Naive thymus-derived CD4-positive, alpha-beta T cell (primary cell): ENCODE measurements at regions of chr12 and their contacts with region 1.

Region 1: DNA sequence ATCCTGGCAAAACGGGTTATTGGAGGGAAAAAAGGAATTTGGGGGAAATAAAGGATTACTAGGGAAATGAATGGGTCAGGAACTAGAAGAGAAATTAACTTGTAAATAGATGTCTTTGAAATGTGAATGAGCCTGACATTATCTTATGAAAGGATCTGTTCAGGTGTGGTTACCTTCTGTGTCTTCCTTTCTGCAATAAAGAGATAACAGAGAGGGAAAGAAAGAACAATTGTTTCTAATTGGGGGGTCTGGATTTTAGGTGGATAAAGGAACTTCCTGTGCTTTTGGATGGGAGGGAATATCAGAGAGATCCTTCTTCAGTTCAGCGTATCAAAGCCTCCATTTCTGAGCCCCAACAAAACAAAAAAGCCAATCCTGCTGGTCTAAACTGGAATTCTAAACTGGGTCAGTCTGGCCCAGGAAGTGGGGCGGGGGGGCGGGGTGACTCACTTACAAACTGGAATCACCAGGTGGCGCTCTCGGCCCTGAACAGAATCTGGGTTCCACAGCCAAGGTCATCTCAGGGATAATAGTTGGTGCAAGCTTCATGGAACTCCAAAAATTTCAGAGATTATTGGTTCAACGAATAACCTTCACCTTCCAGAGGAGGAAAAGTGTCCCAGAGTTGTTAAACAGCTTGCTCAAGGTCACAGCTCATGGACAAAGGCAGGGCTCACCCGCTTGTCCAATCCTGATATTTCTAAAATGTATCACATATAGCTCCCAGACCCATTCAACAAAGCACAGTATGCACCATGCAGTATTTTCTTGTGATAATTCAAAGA is 15.2 kb upstream of the PEBP1 start:
- DNase-seq: peak in 8 of 9 donors; percentile 12 to 50 (median 34)
- ATAC-seq: peak; percentile 76
- H3K4me3 ChIP-seq: no peak overlapping the region
- H3K4me3 Mint-ChIP-seq: no peak overlapping the region
- H3K27ac ChIP-seq: no peak overlapping the region
- H3K27ac Mint-ChIP-seq: peak overlapping the region in 7 of 9 donors; percentile 51 to 71 (median 62)
- H3K4me1 ChIP-seq: peaks cover 0 to 3% of the 10 kb centered on the region in 2 donors
- H3K4me1 Mint-ChIP-seq: peaks cover 4 to 12% (median 8%) of the 10 kb centered on the region in 7 donors
- H3K27me3 ChIP-seq: no peaks in the 10 kb centered on the region
- H3K27me3 Mint-ChIP-seq: no peaks in the 10 kb centered on the region

Region 2: GRCh38 chr12:118082161-118082560 is 38.6 kb before region 1 on chr12:
- CTCF ChIA-PET with region 1: no interaction called
- POLR2A ChIA-PET with region 1: no interaction called
- intact Hi-C with region 1: no loop called
- DNase-seq: no peak
- ATAC-seq: no peak
- H3K4me3 ChIP-seq: no peak overlapping the region
- H3K4me3 Mint-ChIP-seq: no peak overlapping the region
- H3K27ac ChIP-seq: no peak overlapping the region
- H3K27ac Mint-ChIP-seq: no peak overlapping the region
- H3K4me1 ChIP-seq: no peaks in the 10 kb centered on the region
- H3K4me1 Mint-ChIP-seq: peaks cover 0 to 1% (median 0%) of the 10 kb centered on the region in 7 donors
- H3K27me3 ChIP-seq: no peaks in the 10 kb centered on the region
- H3K27me3 Mint-ChIP-seq: no peaks in the 10 kb centered on the region

Region 3: GRCh38 chr12:118183705-118184104 is 62.9 kb after region 1 on chr12:
- CTCF ChIA-PET with region 1: no interaction called
- POLR2A ChIA-PET with region 1: interaction called, 4 read pairs
- intact Hi-C with region 1: loop called in 1 of 2 experiments (anchors 2 kb)
- DNase-seq: no peak
- ATAC-seq: no peak
- H3K4me3 ChIP-seq: no peak overlapping the region
- H3K4me3 Mint-ChIP-seq: no peak overlapping the region
- H3K27ac ChIP-seq: no peak overlapping the region
- H3K27ac Mint-ChIP-seq: peak overlapping the region in 1 of 9 donors; percentile 58
- H3K4me1 ChIP-seq: no peaks in the 10 kb centered on the region
- H3K4me1 Mint-ChIP-seq: peaks cover 7 to 33% (median 16%) of the 10 kb centered on the region in 7 donors
- H3K27me3 ChIP-seq: no peaks in the 10 kb centered on the region
- H3K27me3 Mint-ChIP-seq: no peaks in the 10 kb centered on the region

Region 4: DNA sequence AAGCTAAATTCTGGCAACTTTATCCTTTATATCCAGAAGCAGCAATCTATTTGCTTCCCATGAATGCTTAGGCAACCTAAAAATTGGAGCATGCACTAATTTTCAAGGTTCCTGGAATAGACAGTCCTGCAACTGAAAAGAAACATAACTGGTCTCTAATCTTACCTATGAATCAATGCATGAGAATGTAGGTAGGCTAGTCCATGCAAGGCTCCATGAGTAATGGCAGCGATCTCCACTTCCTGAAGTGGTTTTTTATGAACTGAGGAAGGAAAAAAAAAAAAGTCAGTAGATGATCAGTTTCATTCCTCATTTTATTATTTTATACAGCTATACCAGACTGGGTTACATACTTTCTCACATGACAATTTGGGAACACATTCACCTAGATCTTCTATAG is 117.1 kb after region 1 on chr12:
- CTCF ChIA-PET with region 1: interaction called, 12 read pairs
- POLR2A ChIA-PET with region 1: no interaction called
- intact Hi-C with region 1: no loop called
- DNase-seq: no peak
- ATAC-seq: no peak
- H3K4me3 ChIP-seq: no peak overlapping the region
- H3K4me3 Mint-ChIP-seq: no peak overlapping the region
- H3K27ac ChIP-seq: no peak overlapping the region
- H3K27ac Mint-ChIP-seq: peak overlapping the region in 6 of 9 donors; percentile 8 to 83 (median 38)
- H3K4me1 ChIP-seq: no peaks in the 10 kb centered on the region
- H3K4me1 Mint-ChIP-seq: peaks cover 0 to 11% (median 0%) of the 10 kb centered on the region in 7 donors
- H3K27me3 ChIP-seq: no peaks in the 10 kb centered on the region
- H3K27me3 Mint-ChIP-seq: no peaks in the 10 kb centered on the region

Region 5: GRCh38 chr12:118446244-118446643 is 325.5 kb after region 1 on chr12:
- CTCF ChIA-PET with region 1: no interaction called
- POLR2A ChIA-PET with region 1: no interaction called
- intact Hi-C with region 1: no loop called
- DNase-seq: no peak
- ATAC-seq: no peak
- H3K4me3 ChIP-seq: no peak overlapping the region
- H3K4me3 Mint-ChIP-seq: no peak overlapping the region
- H3K27ac ChIP-seq: no peak overlapping the region
- H3K27ac Mint-ChIP-seq: no peak overlapping the region
- H3K4me1 ChIP-seq: no peaks in the 10 kb centered on the region
- H3K4me1 Mint-ChIP-seq: no peaks in the 10 kb centered on the region
- H3K27me3 ChIP-seq: no peaks in the 10 kb centered on the region
- H3K27me3 Mint-ChIP-seq: peaks cover 0 to 33% (median 28%) of the 10 kb centered on the region in 5 donors